ENCODE measurements at regions of chr1 and their contacts with region 1.

Region 1: DNA sequence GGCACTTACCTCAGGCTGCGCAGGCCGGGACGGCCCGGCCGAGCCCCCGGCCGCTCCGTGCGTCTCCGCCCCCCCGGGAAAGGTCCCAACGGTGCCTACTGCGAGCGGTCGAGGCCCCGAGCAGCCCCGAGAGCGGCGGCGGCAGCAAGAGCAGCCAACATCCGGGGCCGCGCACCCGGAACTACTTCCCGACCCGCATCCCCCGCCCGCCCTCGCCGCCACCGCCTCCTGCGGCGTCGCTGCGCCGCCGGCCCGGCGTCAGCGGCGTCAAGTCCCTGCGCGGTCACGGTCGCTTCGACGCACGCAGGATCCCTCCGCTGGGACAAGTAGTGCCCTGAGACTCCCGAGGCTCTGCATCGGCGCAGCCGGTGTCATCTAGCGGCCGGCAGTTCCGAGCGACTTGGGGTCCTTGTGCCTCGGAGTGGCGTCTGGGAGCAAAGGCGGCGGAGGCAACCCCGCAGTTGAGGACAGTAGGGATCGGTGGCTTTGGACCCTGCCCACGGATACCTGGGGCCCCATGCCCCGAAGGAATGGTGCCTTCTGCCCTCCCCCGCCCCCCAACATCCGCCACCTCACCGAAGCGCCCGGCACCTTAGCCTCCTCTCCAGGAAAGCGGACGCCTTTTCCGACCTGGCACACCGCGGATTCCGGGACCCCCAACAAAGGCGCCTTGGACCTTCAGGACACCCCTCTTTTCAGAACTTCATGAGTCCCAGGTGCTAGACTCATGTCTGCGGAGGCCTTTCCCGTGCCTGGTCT is at the start of gene FOXJ3:
- DNase-seq: peak; percentile 94
- H3K4me3 ChIP-seq: peak within 1 kb of the TSS; percentile 90 to 99 (median 95)
- H3K27ac ChIP-seq: peak within 1 kb of the TSS; percentile 83
- H3K4me1 ChIP-seq: peaks cover 13% of the 10 kb centered on the region
- H3K27me3 ChIP-seq: no peaks in the 10 kb centered on the region
- CTCF ChIP-seq: peak in 1 of 2 donors; percentile 12
- total RNA-seq, gene FOXJ3: 40.8 to 43.1 TPM

Region 2: GRCh38 chr1:42311138-42311537 is 24.1 kb before region 1 on chr1:
- CTCF ChIA-PET with region 1: no interaction called
- dilution Hi-C with region 1: no loop called
- in situ Hi-C with region 1: no loop called
- intact Hi-C with region 1: loop called (anchors 1 kb)
- DNase-seq: no peak
- H3K4me3 ChIP-seq: no peak overlapping the region
- H3K27ac ChIP-seq: no peak overlapping the region
- H3K4me1 ChIP-seq: peaks cover 17% of the 10 kb centered on the region
- H3K27me3 ChIP-seq: no peaks in the 10 kb centered on the region
- CTCF ChIP-seq: no peak

Region 3: GRCh38 chr1:42730988-42731387 is 395.8 kb after region 1 on chr1:
- CTCF ChIA-PET with region 1: no interaction called
- dilution Hi-C with region 1: no loop called
- in situ Hi-C with region 1: no loop called
- intact Hi-C with region 1: loop called (anchors 5 kb)
- DNase-seq: peak; percentile 76
- H3K4me3 ChIP-seq: no peak overlapping the region
- H3K27ac ChIP-seq: no peak overlapping the region
- H3K4me1 ChIP-seq: peaks cover 16% of the 10 kb centered on the region
- H3K27me3 ChIP-seq: no peaks in the 10 kb centered on the region
- CTCF ChIP-seq: peak; percentile 42 to 69

Region 4: GRCh38 chr1:42756956-42757891 is 422.0 kb after region 1 on chr1:
- CTCF ChIA-PET with region 1: no interaction called
- dilution Hi-C with region 1: no loop called
- in situ Hi-C with region 1: loop called in 1 of 2 experiments (anchors 10 kb)
- intact Hi-C with region 1: loop called (anchors 5 kb)
- DNase-seq: peak; percentile 49
- H3K4me3 ChIP-seq: no peak overlapping the region
- H3K27ac ChIP-seq: no peak overlapping the region
- H3K4me1 ChIP-seq: peaks cover 8% of the 10 kb centered on the region
- H3K27me3 ChIP-seq: no peaks in the 10 kb centered on the region
- CTCF ChIP-seq: peak; percentile 70 to 80

Measured in mammary epithelial cell (primary cell).